BJ (cell line): ENCODE measurements at regions of chr3 and their contacts with region 1.

Region 1: DNA sequence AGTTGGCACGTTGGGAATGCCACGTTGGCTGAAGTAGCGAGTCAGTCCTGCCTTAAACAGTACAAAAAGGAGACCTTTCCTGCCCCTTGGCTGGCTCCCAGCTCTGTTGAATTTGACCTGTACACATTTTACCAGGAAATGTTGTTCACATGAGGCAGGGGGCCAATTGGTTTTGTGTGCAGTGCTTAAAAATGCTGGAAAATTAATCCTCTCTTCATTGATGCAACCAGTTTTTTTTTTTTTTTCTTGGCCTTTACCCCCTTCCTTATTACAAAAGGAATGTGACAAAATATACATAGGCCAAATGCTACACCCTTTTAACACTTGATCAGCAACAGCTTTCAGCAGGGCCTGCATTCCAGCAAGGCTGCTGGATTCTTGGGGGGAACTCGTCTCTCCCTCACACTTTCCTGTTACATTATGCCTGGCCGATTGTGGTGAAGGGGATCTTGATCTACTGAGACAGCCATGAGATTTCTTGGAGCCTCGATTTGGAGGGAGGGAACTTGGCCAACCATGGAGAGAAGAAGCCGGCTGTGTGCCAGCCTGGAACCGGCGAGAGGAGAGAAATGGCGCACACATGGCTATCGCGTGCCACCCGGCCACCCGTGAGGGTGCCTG is 93.1 kb downstream of the DNASE1L3 start:
- DNase-seq: no peak
- H3K4me3 ChIP-seq: no peak overlapping the region
- H3K27me3 ChIP-seq: no peaks in the 10 kb centered on the region
- CTCF ChIP-seq: no peak

Region 2: DNA sequence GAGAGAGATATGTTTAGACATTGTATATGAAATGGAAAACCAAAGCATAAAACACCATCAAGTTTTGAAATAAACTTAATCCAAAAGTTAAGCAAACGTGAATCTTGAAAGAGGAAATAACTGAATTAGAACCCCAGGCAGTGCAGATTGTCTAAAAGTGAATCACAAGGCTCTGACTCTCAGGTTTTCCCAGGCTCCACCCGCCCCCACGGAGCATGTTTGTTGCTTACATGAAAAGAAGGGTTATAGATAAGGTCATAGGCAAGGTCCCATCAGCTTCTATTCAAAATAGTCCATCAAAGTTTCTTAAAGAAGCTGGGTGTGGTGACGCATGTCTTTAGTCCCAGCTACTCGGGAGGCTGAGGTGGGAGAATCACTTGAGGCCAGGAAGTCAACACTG is 390.6 kb before region 1 on chr3:
- CTCF ChIA-PET with region 1: no interaction called
- POLR2A ChIA-PET with region 1: no interaction called
- DNase-seq: no peak
- H3K4me3 ChIP-seq: no peak overlapping the region
- H3K27me3 ChIP-seq: no peaks in the 10 kb centered on the region
- CTCF ChIP-seq: no peak

Region 3: GRCh38 chr3:58135712-58136543 is 18.3 kb after region 1 on chr3:
- CTCF ChIA-PET with region 1: interaction called, 10 read pairs
- POLR2A ChIA-PET with region 1: no interaction called
- DNase-seq: no peak
- H3K4me3 ChIP-seq: no peak overlapping the region
- H3K27me3 ChIP-seq: no peaks in the 10 kb centered on the region
- CTCF ChIP-seq: peak; percentile 36

Region 4: DNA sequence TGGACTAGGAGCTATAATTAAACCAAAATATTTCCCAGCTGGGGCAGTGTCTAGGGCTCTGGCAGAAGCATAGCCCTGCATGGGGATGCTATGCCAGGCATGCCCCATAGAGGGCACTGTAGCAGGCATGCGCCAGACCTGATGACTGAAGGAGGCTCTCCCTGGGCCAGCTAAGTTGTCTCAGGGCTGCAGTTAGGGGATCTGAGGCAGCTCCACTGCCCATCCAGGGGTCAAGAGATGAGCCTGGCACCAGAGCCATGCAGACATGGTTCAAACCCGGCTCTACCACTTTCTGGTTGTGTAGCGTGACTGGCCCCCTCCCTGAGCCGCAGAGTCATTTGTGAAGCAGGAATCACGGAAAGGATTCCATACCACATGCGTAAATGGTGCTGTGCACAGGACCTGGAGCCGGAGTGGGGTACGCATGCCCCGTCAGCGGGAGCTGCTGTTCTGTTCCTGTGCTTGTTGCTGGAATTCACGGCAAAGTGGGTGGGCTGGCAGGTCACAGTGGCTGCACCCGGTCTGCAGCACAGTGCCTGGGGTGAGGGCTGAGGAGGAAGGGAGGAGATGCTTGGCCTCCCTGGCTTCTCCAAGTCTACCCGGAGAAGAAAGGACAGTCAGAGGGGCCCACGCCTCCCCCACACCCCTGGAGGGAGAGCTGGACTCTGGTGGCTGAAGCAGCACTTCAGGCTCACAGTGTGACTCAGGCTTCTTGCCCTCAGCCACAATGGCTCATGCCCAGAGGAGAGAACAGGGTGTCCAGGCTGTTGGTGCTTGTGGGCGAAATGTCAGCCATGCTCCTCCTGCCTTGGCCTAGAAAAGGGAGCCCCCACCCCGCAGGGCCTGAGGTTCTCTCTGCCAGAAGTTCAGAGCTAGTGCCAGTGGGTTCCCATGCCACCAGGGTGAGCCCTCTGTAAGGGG is 50.0 kb after region 1 on chr3:
- CTCF ChIA-PET with region 1: no interaction called
- POLR2A ChIA-PET with region 1: no interaction called
- DNase-seq: no peak
- H3K4me3 ChIP-seq: no peak overlapping the region
- H3K27me3 ChIP-seq: no peaks in the 10 kb centered on the region
- CTCF ChIP-seq: peak; percentile 97

Region 5: DNA sequence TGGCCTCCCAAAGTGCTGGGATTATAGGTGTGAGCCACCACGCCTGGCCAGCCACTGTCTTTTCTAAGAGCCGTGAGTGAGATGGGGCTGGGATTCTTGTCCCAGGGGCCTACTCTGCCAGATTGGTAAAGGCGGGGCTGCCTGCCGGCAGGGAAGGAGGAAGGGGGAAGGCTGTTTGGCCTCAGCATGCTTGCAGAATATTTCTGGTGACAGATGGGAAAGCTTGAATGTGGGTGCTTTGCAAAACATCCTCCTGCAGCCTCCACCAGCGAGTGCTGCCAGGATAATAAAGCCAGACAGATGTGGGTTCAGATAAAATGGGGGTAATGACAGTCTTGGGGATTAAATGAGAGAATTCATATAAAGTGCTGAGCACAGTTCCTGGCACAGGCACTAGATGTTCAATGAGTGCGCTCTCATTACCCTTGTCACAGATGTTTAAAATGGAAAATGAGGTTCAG is 439.1 kb after region 1 on chr3:
- CTCF ChIA-PET with region 1: no interaction called
- POLR2A ChIA-PET with region 1: no interaction called
- DNase-seq: no peak
- H3K4me3 ChIP-seq: no peak overlapping the region
- H3K27me3 ChIP-seq: no peaks in the 10 kb centered on the region
- CTCF ChIP-seq: no peak